ENCODE measurements at regions of chr1 and their contacts with region 1.

Region 1: GRCh38 chr1:54406339-54407153 is at the start of gene SSBP3:
- DNase-seq: peak; percentile 99
- H3K4me3 ChIP-seq: peak within 1 kb of the TSS; percentile 71 to 95 (median 84)
- H3K27ac ChIP-seq: peak within 1 kb of the TSS; percentile 76 to 94 (median 90)
- H3K4me1 ChIP-seq: peaks cover 21 to 70% (median 61%) of the 10 kb centered on the region in 6 donors
- H3K27me3 ChIP-seq: peaks cover 0 to 15% (median 0%) of the 10 kb centered on the region in 7 donors
- CTCF ChIP-seq: peak in 4 of 11 experiments; percentile 6 to 52 (median 26)
- POLR2A ChIP-seq: peak in 2 of 3 donors; percentile 55 to 73
- total RNA-seq, gene SSBP3: 24.4 to 73.5 (median 55.4) TPM

Region 2: DNA sequence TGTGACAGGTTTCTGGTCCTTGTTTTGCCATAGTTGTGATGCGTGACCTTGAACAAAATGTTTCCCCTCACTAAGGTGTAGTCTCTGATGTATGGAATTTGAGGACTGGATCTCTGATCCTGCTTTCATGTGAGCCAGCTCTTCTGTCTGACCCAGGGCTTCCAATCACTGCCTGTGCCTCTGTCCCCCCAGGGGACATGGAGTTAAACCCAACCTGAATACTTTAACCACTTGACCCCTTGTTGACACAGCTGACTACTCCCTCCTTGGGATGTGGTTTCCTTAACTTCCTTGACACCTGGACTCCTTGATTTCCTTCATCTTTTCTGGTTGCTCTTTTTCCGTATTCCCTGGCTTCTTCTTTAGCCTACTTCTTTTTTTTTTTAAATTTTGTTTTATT is 35.6 kb after region 1 on chr1:
- intact Hi-C with region 1: no loop called
- DNase-seq: no peak
- H3K4me3 ChIP-seq: no peak overlapping the region
- H3K27ac ChIP-seq: no peak overlapping the region
- H3K4me1 ChIP-seq: no peaks in the 10 kb centered on the region
- H3K27me3 ChIP-seq: no peaks in the 10 kb centered on the region
- CTCF ChIP-seq: no peak
- POLR2A ChIP-seq: no peak

Region 3: DNA sequence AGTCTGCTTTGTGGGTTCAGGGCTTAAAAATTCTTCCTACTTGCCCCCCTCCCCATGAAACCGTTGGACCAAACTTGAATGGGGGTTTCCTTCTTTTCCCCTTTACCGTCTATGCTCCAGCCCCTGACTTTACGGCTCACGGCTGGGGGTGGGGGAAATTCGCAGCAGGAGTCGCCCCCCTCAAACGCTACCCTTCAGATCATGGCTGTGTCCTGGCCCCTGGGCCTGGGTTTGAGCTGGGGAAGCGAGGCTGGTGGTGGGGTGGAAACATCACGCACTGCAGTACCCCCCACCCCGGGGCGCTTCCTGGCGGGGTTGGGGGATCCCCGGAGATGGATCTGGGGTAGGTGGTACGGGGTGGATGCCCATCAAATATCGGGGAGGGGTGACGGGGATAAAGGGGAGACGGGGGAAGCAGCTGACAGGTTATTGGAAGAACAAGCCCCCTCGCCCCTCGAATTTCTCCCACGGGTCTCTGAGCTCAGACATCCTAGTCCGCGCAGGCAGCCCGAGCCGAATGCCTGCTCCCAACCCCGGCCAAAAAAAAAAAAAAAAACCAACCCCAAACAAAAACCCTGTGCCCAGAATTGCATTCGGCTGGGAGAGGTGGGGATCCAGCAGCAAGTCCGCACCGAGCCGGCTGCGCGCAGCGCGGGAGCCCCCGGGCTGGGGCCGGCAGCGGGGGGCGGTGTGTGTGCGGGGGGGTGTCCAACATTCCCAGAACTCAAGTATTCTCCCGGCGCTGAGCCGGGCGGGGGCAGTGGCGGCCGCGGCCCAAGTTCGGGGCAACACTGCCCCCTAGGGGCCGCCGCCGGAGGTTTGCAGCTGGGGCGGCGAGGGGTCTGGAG is 82.5 kb after region 1 on chr1:
- intact Hi-C with region 1: loop called (anchors 2 kb)
- DNase-seq: peak; percentile 95
- H3K4me3 ChIP-seq: peak overlapping the region; percentile 60 to 81 (median 63)
- H3K27ac ChIP-seq: peak overlapping the region; percentile 78 to 91 (median 88)
- H3K4me1 ChIP-seq: peaks cover 17 to 52% (median 36%) of the 10 kb centered on the region in 6 donors
- H3K27me3 ChIP-seq: peaks cover 0 to 42% (median 0%) of the 10 kb centered on the region in 7 donors
- CTCF ChIP-seq: peak; percentile 86 to 98 (median 96)
- POLR2A ChIP-seq: no peak

Measured in spleen (tissue), 13 donors.